ENCODE measurements at regions of chr10 and their contacts with region 1.

Region 1: DNA sequence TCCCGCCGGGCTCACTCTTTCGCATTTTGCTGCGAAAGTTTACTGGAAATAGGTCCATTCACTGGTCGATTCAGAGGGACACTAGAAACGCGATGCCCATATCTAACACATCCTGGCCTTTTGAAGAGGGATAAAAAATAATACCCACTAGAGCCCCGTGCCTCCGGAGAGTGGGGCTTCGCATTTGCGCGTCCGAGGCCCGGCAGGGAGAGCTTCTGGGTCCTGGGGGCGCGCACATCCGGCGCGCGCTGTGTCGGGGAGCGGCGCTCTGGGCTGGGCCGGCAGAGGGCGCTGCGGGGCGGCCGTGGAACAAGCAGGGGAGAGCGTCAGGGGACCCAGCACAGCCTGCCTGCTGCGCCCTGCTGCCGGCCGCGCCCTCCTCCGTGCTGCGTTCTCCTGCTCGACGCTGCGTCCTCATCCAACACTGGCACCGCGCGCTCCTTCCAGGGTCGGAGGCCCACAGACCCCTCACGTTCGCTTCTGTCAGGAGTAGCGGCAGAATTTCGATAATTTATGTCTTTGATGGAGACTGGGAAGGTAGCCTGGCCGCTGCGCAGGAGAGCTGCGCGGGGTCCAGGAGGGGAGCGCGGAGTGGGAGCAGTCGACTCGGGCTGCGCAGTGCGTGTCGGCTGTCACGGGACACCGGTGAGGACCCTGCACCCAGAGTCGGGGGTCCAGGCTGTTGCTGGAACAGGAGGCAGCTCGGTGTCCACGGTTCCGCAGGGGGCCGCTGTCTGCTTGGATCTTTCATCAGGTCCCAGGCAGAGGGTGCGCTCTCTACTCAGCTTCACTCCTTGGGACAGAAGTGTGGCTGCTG is 41.5 kb upstream of the ZNF32 start:
- DNase-seq: peak; percentile 69 to 93 (median 88)
- ATAC-seq: peak; percentile 98
- H3K4me3 ChIP-seq: peak overlapping the region; percentile 90
- H3K4me3 Mint-ChIP-seq: peak overlapping the region; percentile 88 to 93 (median 92)
- H3K27ac ChIP-seq: no peak overlapping the region
- H3K27ac Mint-ChIP-seq: peak overlapping the region in 7 of 9 donors; percentile 28 to 84 (median 43)
- H3K4me1 ChIP-seq: no peaks in the 10 kb centered on the region
- H3K4me1 Mint-ChIP-seq: peaks cover 0 to 10% (median 6%) of the 10 kb centered on the region in 7 donors
- H3K27me3 ChIP-seq: no peaks in the 10 kb centered on the region
- H3K27me3 Mint-ChIP-seq: peaks cover 8 to 27% (median 17%) of the 10 kb centered on the region in 5 donors

Region 2: GRCh38 chr10:43453266-43453831 is 236.8 kb before region 1 on chr10:
- CTCF ChIA-PET with region 1: no interaction called
- POLR2A ChIA-PET with region 1: no interaction called
- intact Hi-C with region 1: no loop called
- DNase-seq: no peak
- ATAC-seq: no peak
- H3K4me3 ChIP-seq: no peak overlapping the region
- H3K4me3 Mint-ChIP-seq: peak overlapping the region; percentile 16 to 95 (median 80)
- H3K27ac ChIP-seq: peak overlapping the region; percentile 64
- H3K27ac Mint-ChIP-seq: peak overlapping the region; percentile 95 to 100 (median 97)
- H3K4me1 ChIP-seq: peaks cover 36 to 51% of the 10 kb centered on the region in 2 donors
- H3K4me1 Mint-ChIP-seq: peaks cover 21 to 59% (median 48%) of the 10 kb centered on the region in 7 donors
- H3K27me3 ChIP-seq: no peaks in the 10 kb centered on the region
- H3K27me3 Mint-ChIP-seq: no peaks in the 10 kb centered on the region

Region 3: DNA sequence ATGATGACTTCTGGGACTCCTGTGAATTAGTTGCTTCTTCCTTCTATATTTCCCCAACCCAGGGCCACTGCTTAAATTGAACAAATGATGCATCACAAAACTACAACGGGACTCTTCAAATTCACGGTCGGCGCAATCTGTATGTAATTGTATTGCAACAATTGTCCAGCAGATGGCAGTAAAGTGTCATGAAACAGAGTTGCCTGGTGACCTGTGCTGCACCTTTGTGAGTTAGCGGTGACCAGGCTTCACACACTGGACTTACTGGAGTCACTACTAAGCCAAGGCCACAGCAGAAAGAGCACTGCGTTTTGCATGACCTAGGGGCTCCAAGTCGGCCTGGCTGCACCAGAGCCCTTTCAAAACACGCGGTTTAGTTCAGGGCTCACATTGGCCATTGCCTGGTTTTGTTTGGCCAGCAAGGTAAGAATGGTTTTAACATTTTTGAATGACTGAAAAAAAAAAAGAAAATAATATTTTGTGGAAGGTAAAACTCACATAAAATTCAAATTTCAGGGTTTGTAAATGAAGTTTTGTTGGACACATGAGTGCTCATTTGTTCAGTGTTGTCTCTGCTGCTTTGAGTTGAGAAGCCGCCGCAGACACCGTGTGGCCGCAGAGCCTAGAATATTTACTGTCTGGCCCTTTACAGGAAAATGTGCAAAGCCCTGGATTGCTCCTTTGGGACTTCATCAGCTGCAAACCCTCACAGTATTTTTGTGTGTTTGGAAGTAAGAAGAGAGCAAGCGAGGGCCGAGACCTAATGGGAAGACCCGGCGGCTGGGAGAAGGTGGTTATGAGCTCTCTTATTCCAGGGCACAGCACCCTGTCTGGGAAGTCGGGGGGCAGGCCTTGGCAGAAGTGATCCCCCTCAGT is 18.3 kb before region 1 on chr10:
- CTCF ChIA-PET with region 1: interaction called, 6 read pairs
- POLR2A ChIA-PET with region 1: no interaction called
- intact Hi-C with region 1: loop called in 1 of 2 experiments (anchors 1 kb)
- DNase-seq: peak in 8 of 9 donors; percentile 18 to 71 (median 52)
- ATAC-seq: peak; percentile 75
- H3K4me3 ChIP-seq: no peak overlapping the region
- H3K4me3 Mint-ChIP-seq: no peak overlapping the region
- H3K27ac ChIP-seq: no peak overlapping the region
- H3K27ac Mint-ChIP-seq: no peak overlapping the region
- H3K4me1 ChIP-seq: no peaks in the 10 kb centered on the region
- H3K4me1 Mint-ChIP-seq: peaks cover 2 to 11% (median 6%) of the 10 kb centered on the region in 7 donors
- H3K27me3 ChIP-seq: no peaks in the 10 kb centered on the region
- H3K27me3 Mint-ChIP-seq: peaks cover 33 to 46% (median 38%) of the 10 kb centered on the region in 5 donors

Region 4: GRCh38 chr10:43824934-43825333 is 134.8 kb after region 1 on chr10:
- CTCF ChIA-PET with region 1: no interaction called
- POLR2A ChIA-PET with region 1: no interaction called
- intact Hi-C with region 1: loop called in 1 of 2 experiments (anchors 10 kb)
- DNase-seq: no peak
- ATAC-seq: no peak
- H3K4me3 ChIP-seq: no peak overlapping the region
- H3K4me3 Mint-ChIP-seq: no peak overlapping the region
- H3K27ac ChIP-seq: no peak overlapping the region
- H3K27ac Mint-ChIP-seq: no peak overlapping the region
- H3K4me1 ChIP-seq: no peaks in the 10 kb centered on the region
- H3K4me1 Mint-ChIP-seq: peaks cover 5 to 25% (median 20%) of the 10 kb centered on the region in 7 donors
- H3K27me3 ChIP-seq: no peaks in the 10 kb centered on the region
- H3K27me3 Mint-ChIP-seq: peaks cover 0 to 27% (median 0%) of the 10 kb centered on the region in 5 donors

Region 5: DNA sequence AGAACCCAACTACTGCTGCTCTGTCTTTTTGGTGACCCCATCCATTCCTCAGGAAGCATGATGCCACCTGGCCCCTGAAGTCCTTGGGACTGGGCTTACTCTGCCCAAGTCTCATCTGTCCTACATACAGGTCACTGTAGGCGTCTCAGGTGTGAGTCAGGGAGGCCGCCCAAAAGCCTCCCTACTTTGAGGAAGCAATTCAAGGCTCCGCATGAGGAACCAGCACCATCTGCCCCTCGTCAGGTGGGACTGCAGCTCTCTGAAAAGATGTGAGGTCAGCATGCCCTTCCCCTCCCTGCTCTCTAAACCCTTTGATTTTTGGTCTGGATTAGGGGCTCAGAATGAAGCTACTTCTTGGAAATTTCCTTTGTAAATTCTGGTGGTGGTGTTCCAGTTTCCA is 340.0 kb after region 1 on chr10:
- CTCF ChIA-PET with region 1: interaction called, 8 read pairs
- POLR2A ChIA-PET with region 1: no interaction called
- intact Hi-C with region 1: loop called (anchors 1 kb)
- DNase-seq: peak in 6 of 9 donors; percentile 9 to 42 (median 25)
- ATAC-seq: peak; percentile 59
- H3K4me3 ChIP-seq: no peak overlapping the region
- H3K4me3 Mint-ChIP-seq: no peak overlapping the region
- H3K27ac ChIP-seq: no peak overlapping the region
- H3K27ac Mint-ChIP-seq: no peak overlapping the region
- H3K4me1 ChIP-seq: no peaks in the 10 kb centered on the region
- H3K4me1 Mint-ChIP-seq: no peaks in the 10 kb centered on the region
- H3K27me3 ChIP-seq: no peaks in the 10 kb centered on the region
- H3K27me3 Mint-ChIP-seq: peaks cover 0 to 24% (median 16%) of the 10 kb centered on the region in 5 donors

Region 6: GRCh38 chr10:44386546-44387052 is 696.4 kb after region 1 on chr10:
- CTCF ChIA-PET with region 1: interaction called, 3 read pairs
- POLR2A ChIA-PET with region 1: no interaction called
- intact Hi-C with region 1: loop called (anchors 1 kb)
- DNase-seq: peak in 6 of 9 donors; percentile 10 to 48 (median 19)
- ATAC-seq: peak; percentile 61
- H3K4me3 ChIP-seq: no peak overlapping the region
- H3K4me3 Mint-ChIP-seq: no peak overlapping the region
- H3K27ac ChIP-seq: no peak overlapping the region
- H3K27ac Mint-ChIP-seq: no peak overlapping the region
- H3K4me1 ChIP-seq: no peaks in the 10 kb centered on the region
- H3K4me1 Mint-ChIP-seq: peaks cover 0 to 8% (median 4%) of the 10 kb centered on the region in 7 donors
- H3K27me3 ChIP-seq: peaks cover 0 to 3% of the 10 kb centered on the region in 2 donors
- H3K27me3 Mint-ChIP-seq: peaks cover 23 to 42% (median 39%) of the 10 kb centered on the region in 5 donors